ENCODE measurements at regions of chr16 and their contacts with region 1.

Region 1: DNA sequence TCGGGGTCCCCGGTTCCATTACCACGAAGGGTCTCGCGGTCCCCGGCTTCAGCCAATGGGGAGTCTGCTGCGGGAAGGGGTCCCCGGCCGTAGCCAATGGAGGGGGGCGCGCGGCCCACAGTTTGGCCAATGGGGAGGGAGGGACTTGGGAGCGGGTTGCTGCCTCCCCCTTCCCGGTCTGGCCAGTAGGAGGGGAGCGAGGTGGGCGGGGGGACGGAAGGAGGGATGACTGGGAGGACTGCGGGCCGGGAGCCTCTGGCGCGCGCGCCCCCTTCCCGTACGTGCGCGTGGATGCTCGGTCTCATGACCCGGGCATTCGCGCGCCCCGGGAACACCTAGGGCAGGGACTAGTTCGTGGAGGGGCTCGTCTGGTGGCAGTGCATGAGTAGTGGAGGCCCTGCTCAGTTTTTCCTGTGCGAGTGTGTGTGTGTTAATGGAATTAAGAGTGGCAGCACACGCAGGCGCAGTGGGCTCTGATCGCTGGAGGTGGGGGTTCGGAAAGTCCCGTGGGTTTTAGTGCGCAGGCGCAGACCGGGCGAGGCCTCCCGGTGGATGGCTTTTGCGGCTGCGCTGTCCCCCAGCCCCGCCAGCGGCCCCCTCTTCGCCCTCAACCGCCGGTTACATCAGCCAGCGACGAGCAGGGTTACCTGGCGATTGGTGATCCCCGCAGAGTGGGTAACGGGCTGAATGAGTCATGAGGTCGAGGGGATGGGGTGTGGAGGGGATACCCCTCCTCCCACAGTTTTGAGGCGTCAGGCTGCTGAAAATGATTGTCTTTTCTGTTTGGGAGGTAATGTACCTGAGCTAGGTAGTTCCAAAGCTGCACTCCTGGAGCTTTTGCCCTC is 1.3 kb downstream of the ATXN2L start:
- DNase-seq: peak; percentile 98 to 99 (median 98)
- ATAC-seq: peak; percentile 93
- H3K4me3 ChIP-seq: peak overlapping the region; percentile 99
- H3K27ac ChIP-seq: peak overlapping the region; percentile 97 to 99
- H3K4me1 ChIP-seq: peaks cover 11 to 41% of the 10 kb centered on the region in 2 donors
- H3K27me3 ChIP-seq: no peaks in the 10 kb centered on the region
- CTCF ChIP-seq: peak; percentile 15 to 38

Region 2: DNA sequence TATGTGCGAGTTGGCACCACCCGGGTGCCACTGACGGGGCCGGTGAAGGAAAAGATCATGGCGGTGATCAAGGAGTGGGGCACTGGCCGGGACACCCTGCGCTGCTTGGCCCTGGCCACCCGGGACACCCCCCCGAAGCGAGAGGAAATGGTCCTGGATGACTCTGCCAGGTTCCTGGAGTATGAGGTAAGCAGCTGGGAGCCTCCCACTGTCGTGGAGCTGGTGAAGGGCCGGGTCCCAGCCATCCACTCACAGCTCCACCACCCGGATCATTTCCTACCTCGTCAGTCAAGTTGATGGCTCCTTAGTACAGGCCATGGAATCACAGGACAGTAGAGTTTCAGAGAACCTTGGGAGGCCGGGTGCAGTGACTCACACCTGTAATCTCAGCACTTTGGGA is 74.2 kb after region 1 on chr16:
- intact Hi-C with region 1: no loop called
- DNase-seq: no peak
- ATAC-seq: no peak
- H3K4me3 ChIP-seq: no peak overlapping the region
- H3K27ac ChIP-seq: no peak overlapping the region
- H3K4me1 ChIP-seq: no peaks in the 10 kb centered on the region
- H3K27me3 ChIP-seq: no peaks in the 10 kb centered on the region
- CTCF ChIP-seq: no peak

Region 3: GRCh38 chr16:28923702-28924398 is 99.8 kb after region 1 on chr16:
- intact Hi-C with region 1: no loop called
- DNase-seq: no peak
- ATAC-seq: peak; percentile 0
- H3K4me3 ChIP-seq: peak overlapping the region; percentile 75 to 76
- H3K27ac ChIP-seq: peak overlapping the region in 1 of 2 donors; percentile 99
- H3K4me1 ChIP-seq: peaks cover 0 to 11% of the 10 kb centered on the region in 2 donors
- H3K27me3 ChIP-seq: no peaks in the 10 kb centered on the region
- CTCF ChIP-seq: no peak

Region 4: DNA sequence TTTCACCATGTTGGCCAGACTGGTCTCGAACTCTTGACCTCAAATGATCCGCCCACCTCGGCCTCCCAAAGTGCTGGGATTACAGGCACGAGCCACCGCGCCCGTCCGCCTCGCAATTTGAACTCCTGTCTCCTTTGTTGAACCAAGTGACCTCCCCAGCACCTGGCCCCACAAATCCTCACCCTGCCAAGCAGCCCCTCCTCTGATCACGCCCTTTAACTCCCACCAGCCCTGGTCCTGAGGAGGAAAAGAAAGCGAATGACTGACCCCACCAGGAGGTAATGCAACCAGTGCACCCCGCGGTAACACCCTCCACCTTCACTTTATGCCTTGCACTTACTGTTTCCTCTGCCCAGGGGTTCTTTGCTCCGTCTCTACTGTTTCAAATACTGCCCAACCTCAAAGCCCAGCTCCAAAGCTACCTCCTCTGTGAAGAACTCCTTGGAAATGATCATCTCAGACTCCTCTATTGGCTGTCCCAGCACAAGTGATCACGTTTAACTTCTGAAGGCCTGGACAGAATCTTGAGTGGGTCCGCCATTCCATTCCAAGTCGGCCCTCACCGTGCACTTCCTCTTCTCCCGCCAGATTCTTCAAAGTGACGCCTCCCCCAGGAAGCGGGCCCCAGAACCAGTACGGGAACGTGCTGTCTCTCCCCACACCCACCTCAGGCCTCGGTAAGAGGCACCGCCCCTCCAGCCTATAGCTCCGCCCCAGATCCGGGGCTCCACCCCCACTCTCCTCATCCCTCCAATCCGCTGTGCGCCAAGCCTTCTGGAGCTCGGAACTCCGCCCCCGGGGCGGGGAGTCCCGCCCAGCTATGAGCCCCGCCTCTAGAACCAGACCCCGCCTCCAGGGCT is 112.1 kb after region 1 on chr16:
- intact Hi-C with region 1: loop called in 1 of 2 experiments (anchors 10 kb)
- DNase-seq: peak in 3 of 4 donors; percentile 65 to 95 (median 89)
- ATAC-seq: peak; percentile 99
- H3K4me3 ChIP-seq: peak overlapping the region; percentile 16 to 27
- H3K27ac ChIP-seq: no peak overlapping the region
- H3K4me1 ChIP-seq: peaks cover 0 to 13% of the 10 kb centered on the region in 2 donors
- H3K27me3 ChIP-seq: no peaks in the 10 kb centered on the region
- CTCF ChIP-seq: no peak

Region 5: GRCh38 chr16:29029168-29029994 is 205.3 kb after region 1 on chr16:
- intact Hi-C with region 1: no loop called
- DNase-seq: no peak
- ATAC-seq: peak; percentile 30
- H3K4me3 ChIP-seq: no peak overlapping the region
- H3K27ac ChIP-seq: no peak overlapping the region
- H3K4me1 ChIP-seq: no peaks in the 10 kb centered on the region
- H3K27me3 ChIP-seq: no peaks in the 10 kb centered on the region
- CTCF ChIP-seq: no peak